ENCODE measurements at regions of chr7 and their contacts with region 1.

Region 1: GRCh38 chr7:116671681-116672595 is at the start of gene MET:
- DNase-seq: peak; percentile 93
- H3K4me3 Mint-ChIP-seq: peak within 1 kb of the TSS; percentile 83
- H3K27ac Mint-ChIP-seq: peak within 1 kb of the TSS; percentile 98
- H3K4me1 Mint-ChIP-seq: peaks cover 19% of the 10 kb centered on the region
- H3K27me3 Mint-ChIP-seq: no peaks in the 10 kb centered on the region
- CTCF ChIP-seq: peak; percentile 64
- total RNA-seq, gene MET: 129 and 154 TPM in 2 replicates

Region 2: GRCh38 chr7:116083796-116084195 is 588.1 kb before region 1 on chr7:
- CTCF ChIA-PET with region 1: no interaction called
- POLR2A ChIA-PET with region 1: no interaction called
- intact Hi-C with region 1: no loop called
- DNase-seq: no peak
- H3K4me3 Mint-ChIP-seq: no peak overlapping the region
- H3K27ac Mint-ChIP-seq: no peak overlapping the region
- H3K4me1 Mint-ChIP-seq: no peaks in the 10 kb centered on the region
- H3K27me3 Mint-ChIP-seq: peaks cover 99% of the 10 kb centered on the region
- CTCF ChIP-seq: no peak

Region 3: GRCh38 chr7:116231949-116232348 is 440.0 kb before region 1 on chr7:
- CTCF ChIA-PET with region 1: no interaction called
- POLR2A ChIA-PET with region 1: no interaction called
- intact Hi-C with region 1: no loop called
- DNase-seq: peak; percentile 42
- H3K4me3 Mint-ChIP-seq: no peak overlapping the region
- H3K27ac Mint-ChIP-seq: no peak overlapping the region
- H3K4me1 Mint-ChIP-seq: peaks cover 37% of the 10 kb centered on the region
- H3K27me3 Mint-ChIP-seq: no peaks in the 10 kb centered on the region
- CTCF ChIP-seq: no peak

Region 4: GRCh38 chr7:116598278-116598677 is 73.7 kb before region 1 on chr7:
- CTCF ChIA-PET with region 1: interaction called, 8 read pairs
- POLR2A ChIA-PET with region 1: interaction called, 5 read pairs
- intact Hi-C with region 1: loop called (anchors 2 kb)
- DNase-seq: peak; percentile 56
- H3K4me3 Mint-ChIP-seq: no peak overlapping the region
- H3K27ac Mint-ChIP-seq: no peak overlapping the region
- H3K4me1 Mint-ChIP-seq: no peaks in the 10 kb centered on the region
- H3K27me3 Mint-ChIP-seq: no peaks in the 10 kb centered on the region
- CTCF ChIP-seq: peak; percentile 75

Region 5: GRCh38 chr7:116661865-116662264 is 10.1 kb before region 1 on chr7:
- CTCF ChIA-PET with region 1: interaction called, 62 read pairs
- POLR2A ChIA-PET with region 1: interaction called, 10 read pairs
- intact Hi-C with region 1: no loop called
- DNase-seq: no peak
- H3K4me3 Mint-ChIP-seq: no peak overlapping the region
- H3K27ac Mint-ChIP-seq: no peak overlapping the region
- H3K4me1 Mint-ChIP-seq: no peaks in the 10 kb centered on the region
- H3K27me3 Mint-ChIP-seq: no peaks in the 10 kb centered on the region
- CTCF ChIP-seq: no peak

Region 6: GRCh38 chr7:116706668-116707126 is 34.8 kb after region 1 on chr7:
- CTCF ChIA-PET with region 1: interaction called, 7 read pairs
- POLR2A ChIA-PET with region 1: interaction called, 77 read pairs
- intact Hi-C with region 1: loop called (anchors 2 kb)
- DNase-seq: peak; percentile 71
- H3K4me3 Mint-ChIP-seq: peak overlapping the region; percentile 68
- H3K27ac Mint-ChIP-seq: peak overlapping the region; percentile 89
- H3K4me1 Mint-ChIP-seq: peaks cover 59% of the 10 kb centered on the region
- H3K27me3 Mint-ChIP-seq: no peaks in the 10 kb centered on the region
- CTCF ChIP-seq: no peak

Region 7: GRCh38 chr7:116776610-116777289 is 104.8 kb after region 1 on chr7:
- CTCF ChIA-PET with region 1: interaction called, 11 read pairs
- POLR2A ChIA-PET with region 1: interaction called, 63 read pairs
- intact Hi-C with region 1: loop called (anchors 2 kb)
- DNase-seq: peak; percentile 94
- H3K4me3 Mint-ChIP-seq: no peak overlapping the region
- H3K27ac Mint-ChIP-seq: peak overlapping the region; percentile 57
- H3K4me1 Mint-ChIP-seq: peaks cover 16% of the 10 kb centered on the region
- H3K27me3 Mint-ChIP-seq: no peaks in the 10 kb centered on the region
- CTCF ChIP-seq: no peak

Region 8: DNA sequence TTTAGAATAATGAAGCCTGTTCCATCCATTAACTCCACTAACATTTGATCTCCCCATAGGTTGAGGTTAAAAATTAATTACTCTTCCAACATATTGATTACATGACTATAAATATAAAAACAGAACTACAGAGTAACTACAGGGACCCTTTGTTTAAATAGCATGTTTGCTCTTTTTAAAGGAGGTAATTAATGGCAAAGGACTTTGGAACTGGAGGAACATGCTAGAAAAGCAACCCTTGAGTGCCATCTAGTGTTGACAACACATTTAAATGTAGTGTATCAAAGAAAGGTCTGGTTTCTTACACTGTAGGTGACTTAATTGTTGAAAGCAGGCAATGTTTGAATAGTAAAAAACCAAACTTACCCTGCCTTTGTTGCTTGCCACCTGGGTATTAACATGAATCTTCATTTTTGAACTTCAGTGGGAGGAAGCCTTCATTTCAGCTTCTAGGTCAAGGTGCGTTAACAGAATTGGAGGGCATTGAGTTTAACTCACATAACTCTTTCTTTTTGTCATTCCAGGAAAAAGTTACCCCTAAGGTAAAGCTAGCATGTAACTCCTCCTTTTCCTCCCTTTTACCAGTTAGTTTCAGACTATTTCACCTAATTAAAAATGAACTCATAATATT is 137.8 kb after region 1 on chr7:
- CTCF ChIA-PET with region 1: interaction called, 10 read pairs
- POLR2A ChIA-PET with region 1: interaction called, 24 read pairs
- intact Hi-C with region 1: loop called (anchors 1 kb)
- DNase-seq: peak; percentile 77
- H3K4me3 Mint-ChIP-seq: no peak overlapping the region
- H3K27ac Mint-ChIP-seq: peak overlapping the region; percentile 75
- H3K4me1 Mint-ChIP-seq: peaks cover 19% of the 10 kb centered on the region
- H3K27me3 Mint-ChIP-seq: no peaks in the 10 kb centered on the region
- CTCF ChIP-seq: peak; percentile 64

Region 9: GRCh38 chr7:117072620-117073118 is 400.7 kb after region 1 on chr7:
- CTCF ChIA-PET with region 1: no interaction called
- POLR2A ChIA-PET with region 1: no interaction called
- intact Hi-C with region 1: no loop called
- DNase-seq: peak; percentile 49
- H3K4me3 Mint-ChIP-seq: no peak overlapping the region
- H3K27ac Mint-ChIP-seq: no peak overlapping the region
- H3K4me1 Mint-ChIP-seq: peaks cover 10% of the 10 kb centered on the region
- H3K27me3 Mint-ChIP-seq: no peaks in the 10 kb centered on the region
- CTCF ChIP-seq: no peak

Region 10: DNA sequence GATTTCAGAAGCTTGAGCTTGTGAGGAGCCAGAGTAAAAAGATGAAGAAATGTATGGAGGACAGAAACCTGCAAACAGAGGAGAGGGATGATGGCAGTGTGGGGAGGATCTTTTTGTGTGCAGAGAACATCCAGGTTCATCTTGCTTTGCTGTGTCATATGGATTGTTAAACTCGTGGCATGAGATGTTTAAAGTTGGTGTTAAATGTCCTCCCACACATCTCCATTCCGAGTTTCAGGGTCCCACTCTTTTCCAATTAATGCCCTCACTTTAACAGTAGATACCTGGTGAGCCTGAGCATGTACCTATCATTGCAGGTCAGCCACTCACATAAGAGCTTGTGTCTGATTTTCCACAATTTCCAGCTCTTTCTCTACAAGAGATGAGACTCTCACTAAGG is 429.1 kb after region 1 on chr7:
- CTCF ChIA-PET with region 1: no interaction called
- POLR2A ChIA-PET with region 1: no interaction called
- intact Hi-C with region 1: no loop called
- DNase-seq: no peak
- H3K4me3 Mint-ChIP-seq: no peak overlapping the region
- H3K27ac Mint-ChIP-seq: no peak overlapping the region
- H3K4me1 Mint-ChIP-seq: peaks cover 9% of the 10 kb centered on the region
- H3K27me3 Mint-ChIP-seq: no peaks in the 10 kb centered on the region
- CTCF ChIP-seq: no peak

Measured in MCF 10A (cell line).